HEK293T (cell line): ENCODE measurements at regions of chr4 and their contacts with region 1.

Region 1: GRCh38 chr4:140427106-140427961 is at the start of gene CLGN:
- DNase-seq: peak; percentile 93

Region 2: GRCh38 chr4:140373328-140374129 is 53.8 kb before region 1 on chr4 and contains the start of gene SCOC:
- CTCF ChIA-PET with region 1: no interaction called
- POLR2A ChIA-PET with region 1: interaction called, 26 read pairs
- DNase-seq: peak; percentile 97

Region 3: GRCh38 chr4:140439644-140440142 is 12.4 kb after region 1 on chr4:
- CTCF ChIA-PET with region 1: interaction called, 16 read pairs
- POLR2A ChIA-PET with region 1: interaction called, 5 read pairs
- DNase-seq: no peak